Astrocyte of the cerebellum (primary cell): ENCODE measurements at regions of chr2 and their contacts with region 1.

Region 1: DNA sequence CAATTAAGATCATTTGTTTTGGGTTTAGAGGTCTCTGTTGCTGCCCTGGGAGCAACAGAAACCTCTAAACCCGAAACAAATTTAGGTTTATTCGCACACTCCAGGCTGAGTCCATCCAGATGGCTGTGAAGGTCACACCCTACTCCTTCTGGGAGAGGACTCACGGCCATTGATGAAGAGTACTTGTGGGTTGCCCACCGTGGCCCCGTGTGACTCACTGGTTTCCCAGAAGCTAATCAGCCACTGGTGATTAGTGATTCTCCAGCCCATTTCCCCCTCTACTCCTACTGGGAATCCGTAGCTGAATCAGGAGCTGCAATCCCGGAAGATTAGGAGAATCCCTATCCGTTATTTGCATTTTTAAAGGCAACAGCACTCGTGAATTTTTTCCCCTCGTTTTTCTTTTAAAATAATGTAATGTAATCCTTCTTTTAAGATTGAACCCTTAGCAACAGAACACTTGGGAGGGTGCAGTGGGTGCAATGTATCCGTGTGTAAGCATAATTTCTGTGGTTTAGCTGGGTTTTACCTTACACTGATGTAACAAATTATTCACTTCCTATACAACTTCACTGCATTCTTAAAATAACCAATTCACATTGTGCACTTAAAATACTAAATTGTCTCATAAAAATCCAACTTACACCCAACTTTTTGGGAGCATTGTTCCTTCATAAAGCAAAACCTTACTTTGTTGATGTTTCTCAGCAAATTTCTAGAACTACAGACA is 27.5 kb upstream of the EPAS1 start:
- DNase-seq: no peak
- H3K4me3 ChIP-seq: no peak overlapping the region
- CTCF ChIP-seq: no peak

Region 2: GRCh38 chr2:45964226-45964845 is 305.4 kb before region 1 on chr2:
- in situ Hi-C with region 1: no loop called
- DNase-seq: peak; percentile 90
- H3K4me3 ChIP-seq: no peak overlapping the region
- CTCF ChIP-seq: no peak

Region 3: DNA sequence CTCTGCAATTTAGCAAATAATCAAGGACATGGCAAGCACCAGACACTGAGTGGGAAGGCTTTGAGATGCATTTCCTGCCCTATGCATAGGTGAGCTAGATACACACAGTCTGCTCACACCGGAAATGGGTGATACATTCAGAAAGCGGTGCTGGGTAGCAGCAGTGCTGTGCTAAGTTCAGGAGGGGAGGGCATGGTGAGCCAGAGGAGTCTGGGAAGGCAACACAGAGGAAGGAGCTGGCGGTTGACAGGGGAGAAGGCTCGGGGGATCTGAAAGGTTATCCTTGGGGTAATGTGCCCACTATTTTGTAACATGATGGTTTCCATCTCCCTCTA is 29.9 kb before region 1 on chr2:
- in situ Hi-C with region 1: loop called (anchors 5 kb)
- DNase-seq: no peak
- H3K4me3 ChIP-seq: no peak overlapping the region
- CTCF ChIP-seq: no peak

Region 4: DNA sequence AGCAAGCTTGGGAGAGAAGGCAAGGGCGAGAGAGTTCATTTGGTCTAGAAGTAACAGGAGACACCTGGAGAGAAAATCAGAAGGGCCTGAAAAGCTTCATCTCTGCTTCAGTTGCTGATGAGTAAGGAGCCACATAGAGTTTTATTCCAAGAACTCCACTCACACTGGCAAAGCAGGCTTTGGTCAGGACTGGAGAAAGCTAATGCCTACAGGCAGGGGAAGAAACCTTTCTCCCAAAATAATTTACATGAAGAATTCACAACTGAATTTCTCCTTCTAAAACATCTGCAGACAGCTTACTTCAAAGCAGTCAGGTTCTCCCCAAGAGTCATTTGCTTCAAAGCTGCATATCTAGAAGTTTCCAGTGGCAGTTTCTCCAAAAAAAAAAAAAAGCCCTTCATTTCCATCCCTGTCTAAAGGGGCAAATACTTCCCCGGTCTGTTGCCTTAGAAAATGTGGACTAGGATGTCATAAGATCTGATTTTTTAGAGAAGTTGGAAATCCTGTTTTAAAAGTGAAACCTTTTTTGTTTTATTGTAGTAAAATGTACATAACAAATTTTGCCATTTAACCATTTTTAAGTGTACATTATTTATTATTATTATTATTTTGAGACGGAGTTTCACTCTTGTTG is 255.9 kb after region 1 on chr2:
- in situ Hi-C with region 1: no loop called
- DNase-seq: no peak
- H3K4me3 ChIP-seq: no peak overlapping the region
- CTCF ChIP-seq: no peak